Activated T-helper 1 cell treated with anti-CD3 and anti-CD28 coated beads, Interleukin-12 subunit alpha, Interleukin-12 subunit beta, Interleukin-2, Interleukin-4 antibody, amounts not matched to agents 30 ng/mL and 10 ng/mL and 1 ng/mL, durations not matched to agents 14 hours and 24 hours and 36 hours (primary cell): ENCODE measurements at regions of chr13 and their contacts with region 1.

Region 1: GRCh38 chr13:42271337-42272114 is 426 bp upstream of the AKAP11 start:
- DNase-seq: peak; percentile 92
- H3K4me3 Mint-ChIP-seq: peak overlapping the region; percentile 92
- H3K27ac Mint-ChIP-seq: peak overlapping the region; percentile 97
- H3K4me1 Mint-ChIP-seq: peaks cover 56% of the 10 kb centered on the region
- H3K27me3 Mint-ChIP-seq: peaks cover 7% of the 10 kb centered on the region

Region 2: GRCh38 chr13:41132512-41133152 is 1138.9 kb before region 1 on chr13 and contains the start of gene KBTBD6:
- intact Hi-C with region 1: loop called (anchors 1 kb)
- DNase-seq: peak; percentile 92
- H3K4me3 Mint-ChIP-seq: peak within 1 kb of the TSS; percentile 92
- H3K27ac Mint-ChIP-seq: peak within 1 kb of the TSS; percentile 93
- H3K4me1 Mint-ChIP-seq: peaks cover 45% of the 10 kb centered on the region
- H3K27me3 Mint-ChIP-seq: peaks cover 3% of the 10 kb centered on the region
- total RNA-seq, gene KBTBD6: 6.6 and 6.8 TPM in 2 replicates

Region 3: DNA sequence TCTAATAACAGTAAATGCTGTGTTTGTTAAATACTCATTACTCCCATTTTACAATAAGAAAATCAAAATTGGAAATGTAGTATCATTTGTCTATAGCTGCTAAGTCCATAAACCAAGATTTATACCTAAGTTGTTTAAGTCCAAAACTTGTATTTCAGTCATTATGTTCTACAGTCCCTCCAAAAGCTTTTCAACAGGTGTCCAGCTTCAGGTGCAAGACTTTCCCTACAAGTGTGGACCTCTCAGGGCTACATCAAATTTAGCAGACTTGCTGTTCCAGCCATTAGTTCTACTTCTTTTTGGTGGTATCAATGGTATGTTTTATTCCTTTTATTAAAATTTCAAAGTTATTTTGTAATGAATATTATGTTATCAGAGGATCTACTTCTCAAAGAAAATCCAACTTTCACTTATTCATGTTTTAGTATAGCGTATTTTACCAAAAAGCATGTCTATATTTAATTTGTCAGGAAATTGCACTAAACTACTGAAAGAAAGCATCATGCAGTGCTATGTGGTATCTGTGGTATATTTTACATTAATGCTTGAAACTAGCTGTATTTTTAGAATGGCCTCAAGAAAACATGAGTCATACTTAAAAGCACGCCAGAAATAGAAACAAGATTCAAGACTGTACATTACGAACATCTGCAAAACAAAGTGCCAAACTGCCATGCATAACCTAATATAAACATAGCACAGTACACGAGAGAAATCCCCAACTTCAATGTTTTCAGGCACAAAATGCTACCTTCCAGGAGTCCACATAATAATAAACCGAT is 355.2 kb before region 1 on chr13:
- intact Hi-C with region 1: loop called (anchors 2 kb)
- DNase-seq: no peak
- H3K4me3 Mint-ChIP-seq: peak overlapping the region; percentile 79
- H3K27ac Mint-ChIP-seq: peak overlapping the region; percentile 96
- H3K4me1 Mint-ChIP-seq: peaks cover 58% of the 10 kb centered on the region
- H3K27me3 Mint-ChIP-seq: no peaks in the 10 kb centered on the region

Region 4: DNA sequence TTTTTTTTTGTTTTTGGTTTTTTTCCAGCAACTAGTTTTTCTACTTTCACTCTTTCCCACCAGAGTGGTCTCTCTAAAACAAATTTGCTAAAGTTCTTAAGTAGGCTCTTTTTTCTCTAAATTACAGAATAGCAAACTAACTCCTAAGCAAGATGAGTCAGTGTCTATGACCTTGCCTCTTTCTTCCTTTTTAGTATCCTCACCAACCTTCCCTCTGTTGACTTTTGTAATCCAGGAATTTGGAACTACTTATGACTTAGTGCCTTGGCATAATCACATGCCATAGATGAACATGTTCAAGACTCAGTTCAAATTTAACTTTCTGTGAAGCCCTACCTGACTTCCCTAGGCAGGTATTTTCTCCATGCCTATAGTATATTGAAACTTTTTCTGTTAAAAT is 31.9 kb before region 1 on chr13:
- intact Hi-C with region 1: no loop called
- DNase-seq: no peak
- H3K4me3 Mint-ChIP-seq: no peak overlapping the region
- H3K27ac Mint-ChIP-seq: no peak overlapping the region
- H3K4me1 Mint-ChIP-seq: no peaks in the 10 kb centered on the region
- H3K27me3 Mint-ChIP-seq: no peaks in the 10 kb centered on the region

Region 5: GRCh38 chr13:42354241-42355091 is 82.9 kb after region 1 on chr13:
- intact Hi-C with region 1: loop called (anchors 1 kb)
- DNase-seq: no peak
- H3K4me3 Mint-ChIP-seq: peak overlapping the region; percentile 72
- H3K27ac Mint-ChIP-seq: peak overlapping the region; percentile 99
- H3K4me1 Mint-ChIP-seq: peaks cover 68% of the 10 kb centered on the region
- H3K27me3 Mint-ChIP-seq: peaks cover 1% of the 10 kb centered on the region

Region 6: DNA sequence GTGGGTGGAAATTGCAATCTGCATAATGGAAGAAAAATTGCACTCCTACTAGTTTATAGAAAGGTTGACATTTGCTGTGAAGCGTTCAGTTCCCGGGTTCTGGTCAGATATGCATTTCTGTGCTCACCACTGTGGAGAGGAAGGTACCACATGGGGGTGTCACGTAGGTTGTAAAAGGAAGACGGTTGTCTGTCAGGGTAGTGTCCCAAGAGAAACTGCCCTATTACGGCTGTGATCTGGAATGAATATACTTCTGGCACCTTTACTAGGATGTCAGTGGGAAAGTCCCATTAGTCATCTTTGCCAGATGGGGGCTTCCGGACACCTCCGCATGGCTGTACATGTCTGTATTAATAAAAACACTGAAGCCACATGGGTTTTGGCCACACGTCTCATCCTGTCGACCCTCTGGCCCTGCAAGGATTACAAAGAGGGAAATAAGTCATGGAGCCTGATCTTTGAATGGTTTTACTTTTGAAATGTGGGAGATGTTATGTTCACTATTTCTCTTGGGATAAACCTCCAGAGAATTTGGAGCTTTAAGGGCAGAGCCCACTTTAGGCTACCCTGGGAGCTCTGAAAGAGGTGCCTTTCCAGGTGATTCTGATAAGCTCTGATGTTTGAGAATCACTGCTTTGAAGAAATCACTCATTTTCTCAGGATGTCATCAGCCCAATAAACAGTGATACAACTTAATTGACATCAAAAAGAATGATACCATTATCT is 134.3 kb after region 1 on chr13:
- intact Hi-C with region 1: loop called (anchors 2 kb)
- DNase-seq: no peak
- H3K4me3 Mint-ChIP-seq: peak overlapping the region; percentile 60
- H3K27ac Mint-ChIP-seq: peak overlapping the region; percentile 96
- H3K4me1 Mint-ChIP-seq: peaks cover 60% of the 10 kb centered on the region
- H3K27me3 Mint-ChIP-seq: no peaks in the 10 kb centered on the region

Region 7: DNA sequence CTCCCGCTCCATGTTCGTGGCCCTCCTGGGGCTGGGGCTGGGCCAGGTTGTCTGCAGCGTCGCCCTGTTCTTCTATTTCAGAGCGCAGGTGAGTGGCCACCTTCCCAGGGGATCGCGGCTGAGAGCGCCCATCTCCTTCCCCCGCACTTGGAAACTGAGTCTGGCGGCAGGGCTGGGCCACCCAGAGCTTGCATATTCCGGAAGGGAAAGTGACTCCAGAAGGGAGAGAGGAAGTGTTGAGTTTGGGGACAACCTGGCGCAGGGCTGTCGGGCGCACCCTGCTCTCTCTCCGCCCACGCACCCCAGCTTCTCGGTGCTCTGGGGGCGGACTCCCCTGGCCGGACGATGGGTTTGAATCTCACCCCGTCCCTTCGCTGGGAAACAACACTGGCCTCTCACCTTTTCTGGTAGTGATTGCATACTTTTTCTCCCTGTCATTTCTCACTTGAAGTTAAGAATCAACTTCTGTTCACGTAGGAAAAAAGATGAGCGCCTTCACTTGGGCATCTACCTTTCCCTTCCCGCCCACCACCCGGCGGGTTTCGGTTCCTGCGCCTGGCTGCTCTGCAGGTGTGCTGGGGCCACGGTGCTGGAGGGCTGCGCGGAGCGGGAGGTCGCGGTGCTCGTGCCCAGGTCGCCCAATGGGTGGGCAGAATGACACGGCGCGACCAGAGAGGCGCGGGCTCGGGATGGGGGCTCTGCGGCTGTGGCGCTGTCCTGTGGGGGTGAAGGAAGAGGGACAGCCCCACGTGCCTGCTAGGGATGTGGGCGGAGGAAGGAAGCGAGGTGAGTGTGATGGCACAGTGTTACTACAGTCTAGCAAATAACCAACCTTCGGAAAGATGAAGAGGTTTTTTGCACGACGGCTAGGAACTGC is 303.1 kb after region 1 on chr13:
- intact Hi-C with region 1: loop called (anchors 2 kb)
- DNase-seq: no peak
- H3K4me3 Mint-ChIP-seq: peak overlapping the region; percentile 74
- H3K27ac Mint-ChIP-seq: peak overlapping the region; percentile 64
- H3K4me1 Mint-ChIP-seq: peaks cover 19% of the 10 kb centered on the region
- H3K27me3 Mint-ChIP-seq: peaks cover 59% of the 10 kb centered on the region